ENCODE measurements at regions of chr2 and their contacts with region 1.

Region 1: GRCh38 chr2:48343571-48344440 is 186.1 kb upstream of the STON1 start:
- DNase-seq: peak in 2 of 9 experiments; percentile 62 to 76
- ATAC-seq: peak; percentile 86
- H3K4me3 ChIP-seq: peak overlapping the region in 1 of 2 experiments; percentile 16
- H3K4me3 Mint-ChIP-seq: peak overlapping the region; percentile 66
- H3K27ac ChIP-seq: peak overlapping the region; percentile 35 to 58
- H3K27ac Mint-ChIP-seq: peak overlapping the region; percentile 84
- H3K4me1 ChIP-seq: peaks cover 27% of the 10 kb centered on the region
- H3K4me1 Mint-ChIP-seq: peaks cover 60% of the 10 kb centered on the region
- H3K27me3 ChIP-seq: no peaks in the 10 kb centered on the region
- H3K27me3 Mint-ChIP-seq: no peaks in the 10 kb centered on the region
- CTCF ChIP-seq: no peak

Region 2: GRCh38 chr2:48315896-48316194 is 28.0 kb before region 1 on chr2:
- CTCF ChIA-PET with region 1: no interaction called
- POLR2A ChIA-PET with region 1: no interaction called
- intact Hi-C with region 1: loop called (anchors 1 to 2 kb)
- DNase-seq: peak in 6 of 9 experiments; percentile 25 to 69 (median 54)
- ATAC-seq: no peak
- H3K4me3 ChIP-seq: peak overlapping the region; percentile 61 to 97
- H3K4me3 Mint-ChIP-seq: peak overlapping the region; percentile 97
- H3K27ac ChIP-seq: peak overlapping the region; percentile 93 to 96
- H3K27ac Mint-ChIP-seq: peak overlapping the region; percentile 88
- H3K4me1 ChIP-seq: peaks cover 43% of the 10 kb centered on the region
- H3K4me1 Mint-ChIP-seq: peaks cover 54% of the 10 kb centered on the region
- H3K27me3 ChIP-seq: no peaks in the 10 kb centered on the region
- H3K27me3 Mint-ChIP-seq: no peaks in the 10 kb centered on the region
- CTCF ChIP-seq: no peak

Region 3: GRCh38 chr2:48332286-48332685 is 11.5 kb before region 1 on chr2:
- CTCF ChIA-PET with region 1: interaction called, 7 read pairs
- POLR2A ChIA-PET with region 1: interaction called, 4 read pairs
- intact Hi-C with region 1: loop called in 1 of 2 experiments (anchors 2 kb)
- DNase-seq: peak in 2 of 9 experiments; percentile 27 to 48
- ATAC-seq: no peak
- H3K4me3 ChIP-seq: no peak overlapping the region
- H3K4me3 Mint-ChIP-seq: peak overlapping the region; percentile 58
- H3K27ac ChIP-seq: no peak overlapping the region
- H3K27ac Mint-ChIP-seq: peak overlapping the region; percentile 50
- H3K4me1 ChIP-seq: peaks cover 30% of the 10 kb centered on the region
- H3K4me1 Mint-ChIP-seq: peaks cover 61% of the 10 kb centered on the region
- H3K27me3 ChIP-seq: no peaks in the 10 kb centered on the region
- H3K27me3 Mint-ChIP-seq: no peaks in the 10 kb centered on the region
- CTCF ChIP-seq: no peak

Measured in CD8-positive, alpha-beta T cell (primary cell).